ENCODE measurements at regions of chr1 and their contacts with region 1.

Region 1: GRCh38 chr1:21200767-21201166 is 24.1 kb upstream of the EIF4G3 start:
- DNase-seq: no peak
- H3K4me3 Mint-ChIP-seq: no peak overlapping the region
- H3K27ac Mint-ChIP-seq: no peak overlapping the region
- H3K4me1 Mint-ChIP-seq: no peaks in the 10 kb centered on the region
- H3K27me3 Mint-ChIP-seq: peaks cover 5% of the 10 kb centered on the region

Region 2: GRCh38 chr1:20696397-20697329 is 504.1 kb before region 1 on chr1:
- intact Hi-C with region 1: loop called (anchors 1 kb)
- DNase-seq: peak; percentile 61
- H3K4me3 Mint-ChIP-seq: peak overlapping the region; percentile 82
- H3K27ac Mint-ChIP-seq: no peak overlapping the region
- H3K4me1 Mint-ChIP-seq: peaks cover 6% of the 10 kb centered on the region
- H3K27me3 Mint-ChIP-seq: peaks cover 3% of the 10 kb centered on the region

Region 3: GRCh38 chr1:20983297-20983889 is 217.4 kb before region 1 on chr1:
- intact Hi-C with region 1: loop called (anchors 1 kb)
- DNase-seq: no peak
- H3K4me3 Mint-ChIP-seq: no peak overlapping the region
- H3K27ac Mint-ChIP-seq: no peak overlapping the region
- H3K4me1 Mint-ChIP-seq: peaks cover 9% of the 10 kb centered on the region
- H3K27me3 Mint-ChIP-seq: no peaks in the 10 kb centered on the region

Measured in activated T-helper 2 cell treated with anti-CD3 and anti-CD28 coated beads, Interferon-gamma antibody, Interleukin-2, Interleukin-4, amounts not matched to agents 10 μg/mL and 5 μg/mL and 100 μg/mL, durations not matched to agents 14 hours and 24 hours and 36 hours (primary cell).